Posterior cingulate gyrus (tissue), 11 donors: ENCODE measurements at regions of chr14 and their contacts with region 1.

Region 1: GRCh38 chr14:71932220-71932981 is at the start of gene RGS6:
- DNase-seq: peak in 9 of 10 donors; percentile 9 to 88 (median 38)

Region 2: DNA sequence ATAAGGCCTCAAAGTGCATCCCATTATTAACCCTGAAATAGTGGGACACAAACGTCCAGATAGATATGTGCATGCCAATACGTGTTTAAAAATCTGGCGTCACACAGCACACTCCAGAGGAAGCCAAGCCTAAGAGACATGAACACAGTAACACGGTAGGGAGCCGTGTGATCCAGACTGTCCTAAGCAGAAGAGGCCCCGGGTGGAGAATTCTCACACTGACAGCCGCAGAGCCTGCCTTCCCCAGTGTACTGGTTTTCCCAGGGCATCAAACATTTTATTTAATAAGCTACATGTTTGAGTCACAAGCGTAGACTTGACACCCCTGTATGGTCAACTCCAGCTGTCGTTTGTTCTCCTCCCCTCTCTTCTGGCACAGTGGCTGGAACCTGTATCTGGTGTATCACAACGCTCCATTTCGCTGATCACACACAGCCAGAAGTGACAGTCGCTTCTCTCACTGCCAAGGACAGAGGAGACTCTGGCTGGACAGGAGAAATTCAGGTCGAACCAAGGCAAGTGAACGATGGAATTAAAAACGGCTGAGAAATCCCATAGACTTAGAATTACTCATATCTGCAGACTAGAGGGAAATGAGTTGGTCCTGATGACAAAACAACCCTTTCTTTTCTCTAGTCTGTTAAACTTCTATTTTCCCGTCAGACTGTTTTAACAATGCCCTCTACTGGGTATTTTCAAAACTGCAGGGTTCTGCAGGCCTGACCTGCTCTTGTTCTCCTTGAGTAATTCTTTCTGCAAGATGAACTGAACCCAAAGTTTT is 359.7 kb after region 1 on chr14:
- intact Hi-C with region 1: loop called (anchors 5 kb)
- DNase-seq: peak in 1 of 10 donors; percentile 9

Region 3: DNA sequence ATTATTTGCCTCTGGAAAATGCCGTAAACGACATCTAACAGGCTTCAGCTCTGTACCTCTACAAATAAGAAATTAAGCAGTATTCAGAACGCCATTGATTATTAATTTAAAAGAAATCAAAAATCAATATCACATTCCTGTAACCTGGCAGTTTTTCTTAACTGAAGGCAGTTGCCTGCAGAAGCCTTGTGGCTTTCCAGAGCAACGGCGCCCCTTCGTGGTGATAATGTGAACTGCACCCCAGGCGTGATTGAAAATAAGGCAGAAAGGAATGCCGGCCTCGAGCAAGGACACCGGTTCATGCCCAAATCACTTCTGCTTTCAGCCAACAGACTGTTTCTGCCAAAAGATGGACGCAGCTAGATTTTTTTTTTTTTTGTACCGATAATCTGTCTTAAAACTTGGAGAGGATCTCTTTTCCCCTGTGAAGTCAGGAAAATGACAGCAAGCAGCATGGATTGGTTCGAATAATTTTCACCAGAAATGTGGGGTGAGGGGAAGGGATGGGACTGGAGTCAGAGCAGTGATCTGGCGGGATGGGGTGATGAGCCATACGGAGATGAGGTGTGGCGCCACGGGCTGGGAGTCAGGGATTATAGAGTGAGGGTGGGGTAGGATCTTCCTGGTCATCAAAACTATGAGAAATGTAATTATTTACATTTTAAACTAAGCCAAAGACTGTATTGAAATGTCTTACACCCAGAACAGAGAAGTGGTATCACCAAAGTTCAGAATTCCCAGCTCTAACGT is 488.5 kb after region 1 on chr14:
- intact Hi-C with region 1: loop called (anchors 5 kb)
- DNase-seq: peak; percentile 66 to 97 (median 86)